SK-N-SH (cell line): ENCODE measurements at regions of chr6 and their contacts with region 1.

Region 1: DNA sequence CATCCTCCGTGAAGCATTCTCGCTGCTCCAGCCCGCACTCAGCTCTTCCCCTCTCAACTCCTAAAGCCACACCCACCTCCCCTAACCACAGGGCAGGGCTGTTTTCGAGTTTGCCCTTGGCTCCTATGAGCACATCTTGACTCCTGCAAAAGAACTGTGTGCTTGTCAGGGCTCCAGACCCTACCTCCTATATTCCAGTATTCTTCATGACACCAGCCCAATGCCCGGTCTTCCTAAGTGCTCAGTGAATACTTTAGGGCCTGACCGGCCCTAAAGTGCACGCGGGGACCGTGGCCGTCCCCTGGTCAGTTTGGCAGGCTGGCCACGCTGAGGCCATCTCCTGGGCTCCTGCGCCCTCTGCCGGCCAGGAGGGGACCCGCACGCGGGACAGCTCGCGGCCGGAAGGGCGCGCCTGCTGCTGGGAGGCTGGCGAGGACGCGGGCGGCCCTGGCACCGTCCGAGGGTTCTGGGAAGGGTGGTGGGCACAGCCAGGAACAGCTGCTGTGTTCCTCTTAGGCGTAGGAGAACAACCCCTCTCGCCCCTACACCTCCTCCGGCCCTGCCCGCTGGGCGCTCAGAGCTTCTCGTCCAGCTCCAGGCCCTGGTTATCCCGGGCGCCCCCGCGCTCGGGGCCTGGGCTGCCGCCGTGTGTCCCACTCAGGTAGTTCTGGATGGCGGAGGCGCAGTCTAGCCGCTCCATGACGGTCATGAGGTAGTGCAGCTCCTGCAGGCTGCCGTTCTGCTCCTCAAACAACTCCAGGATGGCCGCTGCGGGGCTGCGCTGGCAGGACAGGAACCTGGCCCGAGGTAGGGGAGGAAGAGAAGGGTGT is 11.0 kb downstream of the UNC5CL start:
- DNase-seq: peak; percentile 95
- H3K4me3 ChIP-seq: peak overlapping the region in 1 of 2 experiments; percentile 39; a peak in 2 of 4 replicates
- H3K27ac ChIP-seq: no peak overlapping the region
- H3K4me1 ChIP-seq: peaks cover 0 to 12% of the 10 kb centered on the region in 2 experiments; a peak in 1 of 4 replicates
- H3K27me3 ChIP-seq: no peaks in the 10 kb centered on the region
- CTCF ChIP-seq: peak; percentile 95
- EP300 ChIP-seq: no peak
- RAD21 ChIP-seq: peak; percentile 91

Region 2: DNA sequence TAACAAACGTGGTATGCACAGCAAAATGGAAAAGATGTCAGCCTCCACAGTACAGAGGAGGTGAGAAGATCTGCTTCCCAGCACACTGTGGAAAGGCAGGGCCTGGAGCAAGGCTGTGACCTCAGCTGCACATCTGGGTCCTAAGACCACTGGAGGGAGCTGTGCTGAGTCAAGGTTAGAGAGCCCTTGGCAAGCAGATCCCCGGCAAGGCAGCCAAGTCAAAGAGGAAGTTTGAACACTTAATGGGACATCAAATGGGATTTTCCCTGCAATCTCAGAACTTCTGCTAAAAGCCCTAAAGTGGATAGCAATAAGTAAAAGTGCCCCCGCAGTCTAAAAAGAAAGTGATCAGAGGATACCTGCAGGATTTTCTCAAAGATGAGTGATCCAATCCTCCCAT is 28.4 kb before region 1 on chr6:
- CTCF ChIA-PET with region 1: interaction called, 50 read pairs
- POLR2A ChIA-PET with region 1: interaction called, 3 read pairs
- DNase-seq: peak; percentile 36
- H3K4me3 ChIP-seq: no peak overlapping the region
- H3K27ac ChIP-seq: no peak overlapping the region
- H3K4me1 ChIP-seq: peaks cover 7 to 13% of the 10 kb centered on the region in 2 experiments; a peak in 3 of 4 replicates
- H3K27me3 ChIP-seq: no peaks in the 10 kb centered on the region; the same call in 1 of the 2 replicates
- CTCF ChIP-seq: peak; percentile 43
- EP300 ChIP-seq: no peak
- RAD21 ChIP-seq: no peak

Region 3: GRCh38 chr6:41013466-41014153 is 14.4 kb before region 1 on chr6:
- CTCF ChIA-PET with region 1: interaction called, 18 read pairs
- POLR2A ChIA-PET with region 1: no interaction called
- DNase-seq: no peak
- H3K4me3 ChIP-seq: no peak overlapping the region
- H3K27ac ChIP-seq: no peak overlapping the region
- H3K4me1 ChIP-seq: peaks cover 0 to 5% of the 10 kb centered on the region in 2 experiments; a peak in 1 of 4 replicates
- H3K27me3 ChIP-seq: no peaks in the 10 kb centered on the region; the same call in 1 of the 2 replicates
- CTCF ChIP-seq: no peak
- EP300 ChIP-seq: no peak
- RAD21 ChIP-seq: no peak

Region 4: GRCh38 chr6:41053041-41053440 is 25.0 kb after region 1 on chr6 and contains the start of gene APOBEC2:
- CTCF ChIA-PET with region 1: interaction called, 20 read pairs
- POLR2A ChIA-PET with region 1: no interaction called
- DNase-seq: no peak
- H3K4me3 ChIP-seq: no peak within 1 kb of the TSS
- H3K27ac ChIP-seq: no peak within 1 kb of the TSS
- H3K4me1 ChIP-seq: peaks cover 0 to 4% of the 10 kb centered on the region in 2 experiments; a peak in 1 of 4 replicates
- H3K27me3 ChIP-seq: no peaks in the 10 kb centered on the region
- CTCF ChIP-seq: no peak
- EP300 ChIP-seq: no peak
- RAD21 ChIP-seq: no peak
- polyA plus RNA-seq, gene APOBEC2: not detected in 2 replicates